Body of pancreas (tissue), 4 donors: ENCODE measurements at regions of chr14 and their contacts with region 1.

Region 1: GRCh38 chr14:61489932-61490331 is 168.6 kb downstream of the PRKCH start:
- DNase-seq: peak in 2 of 4 donors; percentile 36 to 80
- ATAC-seq: no peak
- H3K4me3 ChIP-seq: no peak overlapping the region
- H3K27ac ChIP-seq: peak overlapping the region in 2 of 4 donors; percentile 31 to 71
- H3K4me1 ChIP-seq: peaks cover 60% of the 10 kb centered on the region
- H3K27me3 ChIP-seq: no peaks in the 10 kb centered on the region
- CTCF ChIP-seq: no peak
- POLR2A ChIP-seq: no peak

Region 2: DNA sequence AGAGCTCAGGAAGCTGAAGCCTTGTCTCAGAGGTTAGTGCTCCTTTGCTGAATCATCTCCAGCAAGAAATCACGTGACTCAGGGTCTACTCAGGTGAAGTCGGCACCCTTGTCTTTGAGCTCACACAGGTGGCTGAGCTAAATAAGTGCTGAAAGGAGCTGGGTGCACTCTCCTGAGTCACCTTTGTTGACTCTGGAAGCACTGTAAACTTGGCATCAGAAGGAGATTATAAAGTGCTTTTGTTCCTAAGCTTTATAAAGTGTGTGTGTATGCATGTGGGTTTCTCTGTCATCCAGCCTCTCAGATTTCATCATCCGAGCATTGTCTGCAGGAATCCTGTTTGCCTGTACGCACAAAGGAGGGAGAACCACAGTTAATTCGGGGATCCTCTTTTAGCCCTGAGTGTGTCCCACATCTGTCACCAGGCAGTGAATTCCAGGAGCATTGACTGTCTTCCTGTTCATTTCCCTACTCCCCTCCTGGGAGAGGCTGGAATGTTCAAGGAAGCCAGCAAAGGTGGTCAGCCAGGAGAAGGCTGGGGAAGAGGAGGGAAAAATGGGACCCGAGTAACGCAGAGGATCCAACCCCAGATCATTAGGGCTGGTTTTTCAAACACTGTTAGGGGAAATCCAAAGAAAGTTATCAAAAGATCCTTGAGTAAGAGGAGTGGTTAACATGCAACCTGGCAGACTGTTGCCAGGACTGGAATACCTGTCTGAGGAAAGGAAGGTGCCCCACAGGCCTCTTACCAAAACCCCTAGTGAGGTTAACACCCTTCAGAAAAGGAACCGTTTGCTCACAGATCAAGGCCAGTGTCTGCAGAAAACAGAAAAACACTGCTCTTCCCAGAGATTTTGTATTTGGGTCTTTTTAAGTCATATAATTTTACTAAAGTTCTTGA is 47.9 kb after region 1 on chr14:
- intact Hi-C with region 1: loop called (anchors 10 kb)
- DNase-seq: peak; percentile 78 to 94 (median 89)
- ATAC-seq: peak; percentile 96
- H3K4me3 ChIP-seq: no peak overlapping the region
- H3K27ac ChIP-seq: peak overlapping the region; percentile 72 to 88 (median 83)
- H3K4me1 ChIP-seq: peaks cover 70% of the 10 kb centered on the region
- H3K27me3 ChIP-seq: no peaks in the 10 kb centered on the region
- CTCF ChIP-seq: peak in 2 of 7 experiments; percentile 17
- POLR2A ChIP-seq: peak in 1 of 3 donors; percentile 17